Right ventricle myocardium inferior (tissue), 1 donor: ENCODE measurements at regions of chrX and their contacts with region 1.

Region 1: DNA sequence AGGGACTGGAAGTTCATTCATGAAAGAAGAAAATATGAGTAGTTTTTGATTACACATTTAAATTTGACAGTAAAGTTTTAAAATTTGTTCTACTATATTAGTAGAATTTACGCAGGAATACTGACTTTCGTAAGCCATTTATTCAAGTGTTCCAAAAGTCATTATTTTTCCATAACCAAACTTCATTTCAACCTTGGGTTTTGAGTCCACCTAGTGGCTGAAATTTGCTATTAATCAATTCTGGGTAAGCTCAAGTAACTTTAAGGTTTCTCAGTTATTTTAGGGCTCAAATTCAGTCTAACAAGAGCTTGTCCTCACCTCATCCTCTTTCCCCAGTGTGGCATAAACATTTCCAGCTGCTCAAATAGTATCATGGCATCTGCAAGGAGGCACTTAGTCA is 175.4 kb downstream of the SH3BGRL start:
- DNase-seq: no peak
- ATAC-seq: no peak

Region 2: DNA sequence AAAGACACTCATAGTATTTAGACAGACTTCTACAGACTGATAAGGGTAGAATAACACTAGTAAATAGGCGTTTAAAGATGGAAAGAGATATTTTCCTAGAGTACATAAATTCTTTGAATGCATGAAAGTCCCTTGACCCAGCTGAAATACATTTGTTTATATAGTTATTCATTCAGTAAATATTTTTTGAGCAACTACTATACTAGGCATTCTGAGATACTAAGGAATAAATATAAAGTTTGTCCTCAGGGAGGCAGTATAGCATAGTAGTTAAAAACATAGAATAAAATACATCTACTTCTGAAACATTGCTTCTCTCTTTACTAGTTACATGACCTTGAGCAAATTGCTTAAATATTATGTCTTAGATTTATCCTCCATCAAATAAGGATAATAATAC is 203.0 kb before region 1 on chrX:
- intact Hi-C with region 1: loop called (anchors 10 kb)
- DNase-seq: no peak
- ATAC-seq: no peak